ENCODE measurements at regions of chr10 and their contacts with region 1.

Region 1: DNA sequence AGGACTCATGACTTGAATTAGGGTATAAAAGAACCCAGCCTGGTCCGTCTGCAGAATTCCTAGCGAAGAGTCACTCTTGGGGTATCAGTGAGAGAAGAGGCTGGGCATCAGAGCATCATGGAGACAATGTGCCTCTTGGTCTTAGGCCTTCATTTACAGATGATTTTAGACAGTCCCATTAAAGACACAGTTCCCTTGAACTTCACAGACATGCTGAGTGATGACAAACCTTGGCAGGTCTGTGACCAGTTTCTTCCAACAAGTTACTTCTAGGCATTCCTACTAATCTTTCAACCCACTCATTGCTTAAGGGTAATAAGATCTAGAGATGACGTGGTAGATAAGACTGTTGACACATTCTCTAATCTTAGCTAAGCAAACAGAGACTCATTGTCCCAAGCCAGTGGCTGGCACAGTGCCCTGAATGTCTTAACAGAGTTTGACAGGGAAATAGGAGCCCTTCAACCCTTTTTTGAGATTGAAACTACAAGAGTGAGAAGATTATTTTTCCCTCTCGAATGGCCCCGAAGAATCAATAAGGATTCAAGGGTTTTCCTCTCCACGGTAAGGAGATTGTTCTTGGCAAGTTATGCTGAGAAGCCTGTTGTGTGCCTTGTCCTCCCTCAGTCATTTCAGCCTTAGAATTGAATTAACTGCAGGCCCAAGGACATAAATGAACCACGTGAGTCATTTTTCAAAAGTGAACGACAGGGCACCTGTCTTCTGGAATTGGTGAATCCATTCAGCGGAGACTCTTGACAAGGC is 281.1 kb downstream of the CCDC3 start:
- DNase-seq: peak; percentile 84 to 91
- H3K4me3 ChIP-seq: no peak overlapping the region
- H3K4me3 Mint-ChIP-seq: peak overlapping the region; percentile 53
- H3K27ac Mint-ChIP-seq: peak overlapping the region; percentile 91
- H3K4me1 ChIP-seq: peaks cover 26% of the 10 kb centered on the region
- H3K4me1 Mint-ChIP-seq: peaks cover 30% of the 10 kb centered on the region
- H3K27me3 ChIP-seq: no peaks in the 10 kb centered on the region
- H3K27me3 Mint-ChIP-seq: no peaks in the 10 kb centered on the region
- CTCF ChIP-seq: no peak

Region 2: DNA sequence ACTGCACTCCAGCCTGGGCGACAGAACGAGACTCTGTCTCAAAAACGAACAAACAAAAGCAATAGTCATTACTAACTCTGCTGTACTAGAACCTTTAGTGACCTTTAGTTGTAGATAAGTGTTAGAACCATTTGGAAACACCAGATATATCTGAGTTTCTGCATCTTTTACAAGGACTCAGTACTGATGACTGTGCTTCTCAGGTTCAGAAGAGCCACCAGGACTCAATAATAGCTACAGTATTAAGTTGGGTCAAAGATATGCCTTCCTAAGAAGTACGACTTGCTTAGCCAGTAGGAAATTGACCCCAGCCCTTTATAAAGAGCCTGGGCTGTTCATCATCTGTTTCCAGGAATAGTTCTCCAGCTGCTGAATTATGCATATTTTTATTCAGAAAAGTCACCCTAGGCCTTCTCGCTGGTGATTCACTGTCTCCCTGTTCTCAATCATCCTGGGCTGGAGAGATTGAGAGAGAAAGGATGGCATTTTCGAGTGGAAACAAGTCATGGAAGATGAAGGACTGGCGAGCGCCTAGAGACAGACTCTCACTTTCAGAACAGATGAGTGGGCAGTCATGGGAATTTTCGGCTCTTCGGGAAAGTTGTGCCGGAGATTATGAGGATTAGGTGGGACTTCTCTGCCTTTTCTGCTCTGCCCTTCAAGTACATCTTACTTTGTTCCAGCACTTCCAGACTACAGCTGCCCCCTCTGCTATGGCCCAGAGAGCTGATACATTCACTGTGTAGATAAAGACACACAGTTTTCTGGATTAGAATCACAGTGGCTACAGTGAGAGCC is 34.9 kb before region 1 on chr10:
- CTCF ChIA-PET with region 1: no interaction called
- POLR2A ChIA-PET with region 1: no interaction called
- intact Hi-C with region 1: no loop called
- DNase-seq: no peak
- H3K4me3 ChIP-seq: no peak overlapping the region
- H3K4me3 Mint-ChIP-seq: no peak overlapping the region
- H3K27ac Mint-ChIP-seq: no peak overlapping the region
- H3K4me1 ChIP-seq: peaks cover 8% of the 10 kb centered on the region; the same call in 1 of the 2 replicates
- H3K4me1 Mint-ChIP-seq: peaks cover 7% of the 10 kb centered on the region
- H3K27me3 ChIP-seq: no peaks in the 10 kb centered on the region
- H3K27me3 Mint-ChIP-seq: peaks cover 7% of the 10 kb centered on the region
- CTCF ChIP-seq: no peak

Region 3: DNA sequence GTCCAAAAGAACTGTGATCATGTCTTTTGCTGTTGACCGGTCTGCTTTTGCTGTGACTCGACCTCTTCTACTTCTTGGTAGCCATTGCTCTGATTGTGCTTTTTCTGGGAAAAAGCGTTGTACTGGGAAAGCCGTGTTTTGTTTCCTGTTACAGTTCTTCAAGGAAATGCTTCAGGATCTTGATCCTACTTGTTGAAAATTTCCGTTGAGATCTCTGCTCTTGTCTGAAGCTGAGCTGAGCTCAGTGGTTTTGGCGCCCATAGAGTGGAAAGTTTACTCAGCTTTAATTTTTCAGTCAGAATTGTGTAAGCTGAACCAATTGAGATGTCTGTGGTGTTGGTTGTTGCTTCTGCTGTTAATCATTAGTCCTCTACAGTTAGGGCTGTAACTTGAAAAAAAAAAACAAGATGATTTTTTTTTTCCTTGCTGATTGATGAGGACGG is 21.1 kb before region 1 on chr10:
- CTCF ChIA-PET with region 1: no interaction called
- POLR2A ChIA-PET with region 1: no interaction called
- intact Hi-C with region 1: no loop called
- DNase-seq: no peak
- H3K4me3 ChIP-seq: no peak overlapping the region
- H3K4me3 Mint-ChIP-seq: no peak overlapping the region
- H3K27ac Mint-ChIP-seq: peak overlapping the region; percentile 10
- H3K4me1 ChIP-seq: no peaks in the 10 kb centered on the region
- H3K4me1 Mint-ChIP-seq: no peaks in the 10 kb centered on the region
- H3K27me3 ChIP-seq: no peaks in the 10 kb centered on the region
- H3K27me3 Mint-ChIP-seq: no peaks in the 10 kb centered on the region
- CTCF ChIP-seq: no peak

Region 4: DNA sequence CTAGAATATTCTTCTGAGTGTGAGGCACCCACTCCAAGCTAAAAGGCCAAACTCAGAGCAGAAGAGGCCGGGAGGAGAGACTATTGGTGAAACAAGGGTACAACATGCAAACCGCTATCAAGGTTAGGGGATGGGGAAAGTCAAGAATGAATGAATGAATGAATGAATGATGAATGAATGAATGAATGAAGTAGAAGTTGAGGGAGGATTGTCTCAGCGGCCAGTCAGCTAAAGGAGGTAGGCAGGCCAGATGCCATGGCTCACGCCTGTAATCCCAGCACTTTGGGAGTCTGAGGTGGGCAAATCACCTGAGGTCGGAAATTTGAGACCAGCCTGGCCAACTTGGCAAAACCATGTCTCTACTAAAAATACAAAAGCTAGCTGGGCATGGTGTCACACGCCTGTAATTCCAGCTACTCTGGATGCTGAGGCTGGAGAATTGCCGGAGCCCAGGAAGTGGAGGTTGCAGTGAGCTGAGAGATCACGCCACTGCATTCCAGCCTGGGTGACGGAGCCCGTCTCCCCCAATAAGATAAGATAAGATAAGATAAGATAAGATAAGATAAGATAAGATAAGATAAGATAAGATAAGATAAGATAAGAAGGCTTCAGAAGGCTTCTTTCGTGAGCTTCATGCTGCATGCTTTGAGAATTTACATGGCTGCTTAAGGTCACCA is 30.3 kb after region 1 on chr10:
- CTCF ChIA-PET with region 1: no interaction called
- POLR2A ChIA-PET with region 1: no interaction called
- intact Hi-C with region 1: loop called (anchors 1 kb)
- DNase-seq: peak; percentile 88 to 89
- H3K4me3 ChIP-seq: no peak overlapping the region
- H3K4me3 Mint-ChIP-seq: peak overlapping the region; percentile 72
- H3K27ac Mint-ChIP-seq: peak overlapping the region; percentile 99
- H3K4me1 ChIP-seq: peaks cover 38% of the 10 kb centered on the region
- H3K4me1 Mint-ChIP-seq: peaks cover 32% of the 10 kb centered on the region
- H3K27me3 ChIP-seq: no peaks in the 10 kb centered on the region
- H3K27me3 Mint-ChIP-seq: peaks cover 4% of the 10 kb centered on the region
- CTCF ChIP-seq: no peak

Region 5: DNA sequence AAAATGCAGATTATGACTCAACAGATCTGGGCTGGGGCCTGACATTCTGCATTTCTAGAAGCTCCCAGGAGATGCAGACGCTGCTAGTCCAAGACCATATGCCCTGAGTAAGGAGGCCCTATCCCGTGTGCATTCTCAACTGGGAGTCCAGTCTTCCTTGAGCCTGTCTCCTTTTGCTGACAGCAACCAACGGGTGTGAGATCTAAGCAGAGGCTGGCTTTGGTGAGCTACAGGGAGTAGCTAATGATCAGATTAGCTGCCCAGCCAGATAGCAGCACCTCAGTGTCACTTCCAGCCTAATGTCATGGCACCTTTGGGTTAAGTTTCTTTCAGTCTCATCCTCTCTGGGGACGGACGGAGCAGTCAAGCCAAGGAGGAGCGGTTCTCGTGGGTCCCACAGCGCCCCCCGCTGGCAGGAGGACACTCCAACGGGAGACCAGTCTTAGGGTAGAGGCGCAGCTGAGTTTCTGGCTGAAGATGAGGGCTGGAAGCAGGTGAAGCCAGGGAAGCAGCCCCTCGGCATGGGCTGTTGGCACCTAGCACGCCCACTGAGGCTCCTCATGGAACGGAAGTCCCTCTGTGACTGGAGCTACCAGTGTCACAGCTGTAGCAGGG is 127.1 kb after region 1 on chr10:
- CTCF ChIA-PET with region 1: no interaction called
- POLR2A ChIA-PET with region 1: no interaction called
- intact Hi-C with region 1: loop called (anchors 1 kb)
- DNase-seq: peak in 1 of 2 experiments; percentile 52
- H3K4me3 ChIP-seq: no peak overlapping the region
- H3K4me3 Mint-ChIP-seq: no peak overlapping the region
- H3K27ac Mint-ChIP-seq: no peak overlapping the region
- H3K4me1 ChIP-seq: peaks cover 12% of the 10 kb centered on the region
- H3K4me1 Mint-ChIP-seq: peaks cover 9% of the 10 kb centered on the region
- H3K27me3 ChIP-seq: no peaks in the 10 kb centered on the region
- H3K27me3 Mint-ChIP-seq: no peaks in the 10 kb centered on the region
- CTCF ChIP-seq: peak; percentile 23 to 56

Region 6: DNA sequence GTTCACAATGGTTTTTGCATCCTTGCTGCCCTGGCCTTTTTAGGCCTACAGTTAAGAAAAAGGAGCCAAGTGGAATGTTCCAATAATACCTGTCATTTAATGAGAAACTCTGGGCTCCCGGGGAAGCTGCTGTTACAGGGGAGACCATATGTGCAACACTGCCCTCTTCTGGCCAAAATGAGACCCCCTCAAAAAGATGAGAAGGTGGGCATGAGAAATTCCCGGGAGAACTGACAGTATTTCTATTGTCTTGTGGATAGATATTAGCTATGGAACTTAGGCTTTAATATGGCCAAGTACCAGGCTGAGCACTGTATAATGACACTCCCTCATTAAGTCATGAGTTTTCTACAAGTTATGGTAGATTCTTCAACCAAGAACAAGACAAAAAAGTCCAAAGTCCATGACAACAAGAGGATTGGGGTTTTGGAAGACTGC is 181.8 kb after region 1 on chr10:
- CTCF ChIA-PET with region 1: interaction called, 4 read pairs
- POLR2A ChIA-PET with region 1: no interaction called
- intact Hi-C with region 1: loop called (anchors 1 kb)
- DNase-seq: peak; percentile 65 to 77
- H3K4me3 ChIP-seq: no peak overlapping the region
- H3K4me3 Mint-ChIP-seq: no peak overlapping the region
- H3K27ac Mint-ChIP-seq: no peak overlapping the region
- H3K4me1 ChIP-seq: no peaks in the 10 kb centered on the region
- H3K4me1 Mint-ChIP-seq: no peaks in the 10 kb centered on the region
- H3K27me3 ChIP-seq: no peaks in the 10 kb centered on the region
- H3K27me3 Mint-ChIP-seq: peaks cover 4% of the 10 kb centered on the region
- CTCF ChIP-seq: peak; percentile 82 to 91

Region 7: GRCh38 chr10:12975266-12975665 is 254.9 kb after region 1 on chr10:
- CTCF ChIA-PET with region 1: no interaction called
- POLR2A ChIA-PET with region 1: no interaction called
- intact Hi-C with region 1: loop called (anchors 5 kb)
- DNase-seq: peak in 1 of 2 experiments; percentile 49
- H3K4me3 ChIP-seq: no peak overlapping the region
- H3K4me3 Mint-ChIP-seq: no peak overlapping the region
- H3K27ac Mint-ChIP-seq: no peak overlapping the region
- H3K4me1 ChIP-seq: peaks cover 3% of the 10 kb centered on the region; the same call in 1 of the 2 replicates
- H3K4me1 Mint-ChIP-seq: peaks cover 12% of the 10 kb centered on the region
- H3K27me3 ChIP-seq: no peaks in the 10 kb centered on the region
- H3K27me3 Mint-ChIP-seq: peaks cover 3% of the 10 kb centered on the region
- CTCF ChIP-seq: peak; percentile 51 to 77

Region 8: DNA sequence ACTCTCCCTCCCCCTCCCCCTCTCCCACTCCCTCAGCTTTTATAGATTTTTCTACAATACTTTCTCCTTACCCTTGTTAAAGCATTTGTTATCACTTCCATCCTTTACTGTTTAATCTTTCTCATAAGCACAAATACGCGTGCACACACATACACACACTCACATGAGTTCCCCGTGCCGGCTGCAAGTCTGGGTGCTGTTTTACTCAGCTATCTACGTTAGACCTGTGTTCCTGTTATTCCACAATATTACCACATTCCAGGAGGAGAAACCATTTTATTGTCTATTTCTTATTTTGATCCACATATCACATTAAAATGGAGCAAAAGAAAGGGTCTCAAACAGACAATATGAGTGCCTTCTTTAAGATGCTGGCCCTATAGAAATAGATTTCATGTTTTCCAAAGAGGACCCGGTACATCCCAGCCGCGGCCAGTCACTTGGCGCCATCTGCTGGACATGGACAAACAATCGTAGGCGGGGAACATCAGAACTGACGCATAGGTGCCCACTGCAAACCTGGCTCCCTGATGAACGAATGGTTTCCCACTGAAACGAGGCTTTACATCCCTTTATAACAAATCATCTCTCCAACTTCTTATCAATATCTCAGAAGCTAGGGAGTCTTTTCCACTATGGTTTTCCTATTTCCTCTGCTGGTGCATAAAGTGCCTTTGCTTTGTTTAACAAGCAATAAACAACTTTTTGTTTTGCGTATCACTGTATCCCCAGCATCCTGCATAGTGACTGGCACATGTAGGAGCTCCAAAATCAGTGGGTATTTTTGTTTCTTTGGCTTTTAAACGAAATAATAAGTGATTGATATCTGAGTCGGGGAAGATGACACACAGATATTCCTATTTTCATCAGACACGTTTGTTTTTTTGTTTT is 354.4 kb after region 1 on chr10:
- CTCF ChIA-PET with region 1: no interaction called
- POLR2A ChIA-PET with region 1: no interaction called
- intact Hi-C with region 1: loop called (anchors 1 kb)
- DNase-seq: peak; percentile 74 to 87
- H3K4me3 ChIP-seq: no peak overlapping the region
- H3K4me3 Mint-ChIP-seq: no peak overlapping the region
- H3K27ac Mint-ChIP-seq: no peak overlapping the region
- H3K4me1 ChIP-seq: no peaks in the 10 kb centered on the region
- H3K4me1 Mint-ChIP-seq: no peaks in the 10 kb centered on the region
- H3K27me3 ChIP-seq: no peaks in the 10 kb centered on the region
- H3K27me3 Mint-ChIP-seq: peaks cover 2% of the 10 kb centered on the region
- CTCF ChIP-seq: peak; percentile 95 to 97